HepG2 (cell line): ENCODE measurements at regions of chr5 and their contacts with region 1.

Region 1: DNA sequence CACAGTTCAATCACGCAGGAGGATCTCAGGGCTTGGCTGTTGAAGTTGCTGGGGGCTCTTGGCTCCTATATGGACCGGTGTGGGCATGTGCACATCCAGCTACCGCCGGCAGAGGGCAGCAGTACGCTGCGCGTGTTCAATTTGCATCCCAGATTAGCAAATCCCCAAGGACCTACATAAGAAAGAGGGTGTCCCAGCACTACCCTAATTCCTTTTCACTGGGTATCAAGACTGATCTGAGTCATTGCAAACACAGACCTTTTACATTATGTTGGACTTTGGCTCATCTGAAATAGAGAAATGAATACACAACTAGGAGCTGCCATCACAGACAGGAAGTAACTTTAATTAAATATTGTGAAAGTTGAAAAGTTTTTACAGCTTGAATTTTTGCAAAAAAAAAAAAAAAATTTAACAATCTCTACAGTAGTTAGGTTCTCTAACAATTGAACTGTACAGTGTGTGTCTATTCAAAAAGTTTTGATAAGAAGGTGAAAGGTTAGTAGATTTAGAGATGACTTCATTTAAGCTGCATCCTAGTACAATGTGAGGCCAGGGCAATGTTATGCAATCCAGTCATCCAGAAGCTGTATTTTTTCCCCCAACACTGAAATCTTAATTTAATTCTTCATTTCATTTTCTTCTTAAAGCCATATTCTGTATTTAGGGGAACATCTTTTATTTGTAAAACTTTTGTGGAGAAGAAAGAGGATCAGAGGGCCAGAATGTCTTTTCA is 404.0 kb downstream of the EBF1 start:
- DNase-seq: peak; percentile 20
- ATAC-seq: peak; percentile 89
- H3K4me3 ChIP-seq: no peak overlapping the region
- H3K27ac ChIP-seq: no peak overlapping the region
- H3K4me1 ChIP-seq: no peaks in the 10 kb centered on the region
- H3K27me3 ChIP-seq: peaks cover 0 to 4% of the 10 kb centered on the region in 2 experiments; a peak in 1 of 5 replicates
- CTCF ChIP-seq: peak; percentile 85
- EP300 ChIP-seq: no peak
- POLR2A ChIP-seq: no peak
- RAD21 ChIP-seq: peak; percentile 74

Region 2: DNA sequence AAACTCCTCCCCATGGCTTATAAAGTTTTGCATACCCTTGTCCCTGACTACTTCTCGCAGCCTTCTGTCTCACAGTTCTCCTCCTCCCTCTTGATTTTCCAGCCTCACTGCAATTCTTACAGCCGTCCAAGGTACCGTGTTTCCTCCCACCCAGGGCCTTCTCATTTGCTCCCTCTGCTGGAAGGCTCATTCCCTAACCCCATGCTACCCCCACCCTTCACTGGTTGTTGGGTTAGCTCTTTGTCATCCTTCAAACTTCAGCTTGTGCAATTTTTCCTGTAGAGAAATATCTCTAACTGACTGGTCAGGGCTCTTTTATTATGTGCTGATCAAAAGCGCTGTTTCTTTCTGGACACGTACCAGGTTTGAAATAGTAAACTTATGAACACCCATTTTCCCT is 74.7 kb after region 1 on chr5:
- CTCF ChIA-PET with region 1: interaction called, 3 read pairs
- POLR2A ChIA-PET with region 1: no interaction called
- in situ Hi-C with region 1: no loop called
- intact Hi-C with region 1: loop called (anchors 1 kb)
- DNase-seq: peak; percentile 2
- ATAC-seq: peak; percentile 84
- H3K4me3 ChIP-seq: no peak overlapping the region
- H3K27ac ChIP-seq: no peak overlapping the region
- H3K4me1 ChIP-seq: no peaks in the 10 kb centered on the region
- H3K27me3 ChIP-seq: no peaks in the 10 kb centered on the region
- CTCF ChIP-seq: peak; percentile 54
- EP300 ChIP-seq: no peak
- POLR2A ChIP-seq: no peak
- RAD21 ChIP-seq: no peak

Region 3: GRCh38 chr5:159106569-159107282 is 411.0 kb after region 1 on chr5:
- CTCF ChIA-PET with region 1: interaction called, 37 read pairs
- POLR2A ChIA-PET with region 1: no interaction called
- in situ Hi-C with region 1: loop called (anchors 5 kb)
- intact Hi-C with region 1: loop called (anchors 1 kb)
- DNase-seq: peak; percentile 24
- ATAC-seq: peak; percentile 96
- H3K4me3 ChIP-seq: no peak overlapping the region
- H3K27ac ChIP-seq: no peak overlapping the region
- H3K4me1 ChIP-seq: no peaks in the 10 kb centered on the region
- H3K27me3 ChIP-seq: peaks cover 1 to 30% of the 10 kb centered on the region in 2 experiments
- CTCF ChIP-seq: peak; percentile 90
- EP300 ChIP-seq: no peak
- POLR2A ChIP-seq: no peak
- RAD21 ChIP-seq: peak; percentile 87

Region 4: DNA sequence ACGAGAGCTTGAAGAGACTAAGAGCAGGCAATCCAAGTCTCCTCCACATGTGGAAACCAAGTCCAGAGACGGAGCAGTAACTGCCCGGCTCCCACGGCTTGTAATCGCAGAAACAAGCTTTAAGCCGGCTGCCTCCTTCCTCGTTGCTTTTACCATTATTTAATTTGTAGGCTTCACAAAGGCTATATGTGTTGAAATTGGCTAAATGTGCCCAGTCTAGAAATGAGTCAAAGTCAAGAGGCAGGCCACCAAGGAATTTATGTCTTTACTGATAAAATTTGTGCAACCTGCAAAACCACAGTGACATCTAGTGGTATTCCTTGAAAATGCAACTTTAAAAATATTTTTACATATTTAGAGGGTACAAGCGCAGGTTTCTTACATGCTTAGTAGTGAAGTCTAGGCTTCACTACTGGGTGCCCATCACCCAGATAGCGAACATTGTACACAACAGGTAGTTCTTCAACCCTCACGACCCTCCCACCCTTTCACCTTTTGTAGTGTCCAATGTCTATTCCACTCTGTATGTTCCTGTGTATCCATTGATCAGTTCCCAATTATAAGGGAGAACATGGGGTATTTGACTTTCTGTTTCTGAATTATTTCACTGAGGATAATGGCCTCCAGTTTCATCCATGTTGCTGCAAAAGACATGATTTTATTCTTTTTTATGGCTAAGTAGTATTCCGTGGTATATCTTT is 437.4 kb after region 1 on chr5:
- CTCF ChIA-PET with region 1: no interaction called
- POLR2A ChIA-PET with region 1: no interaction called
- in situ Hi-C with region 1: no loop called
- intact Hi-C with region 1: loop called (anchors 2 kb)
- DNase-seq: peak; percentile 27
- ATAC-seq: peak; percentile 50; the same call in 1 of the 3 replicates
- H3K4me3 ChIP-seq: no peak overlapping the region
- H3K27ac ChIP-seq: no peak overlapping the region
- H3K4me1 ChIP-seq: no peaks in the 10 kb centered on the region
- H3K27me3 ChIP-seq: 0 out of 5 replicates have a peak, but pooled peaks cover 0 to 3% of the 10 kb centered on the region in 2 experiments
- CTCF ChIP-seq: peak; percentile 71
- EP300 ChIP-seq: no peak
- POLR2A ChIP-seq: no peak
- RAD21 ChIP-seq: peak; percentile 36; the same call in 1 of the 2 replicates